ENCODE measurements at regions of chr10 and their contacts with region 1.

Region 1: DNA sequence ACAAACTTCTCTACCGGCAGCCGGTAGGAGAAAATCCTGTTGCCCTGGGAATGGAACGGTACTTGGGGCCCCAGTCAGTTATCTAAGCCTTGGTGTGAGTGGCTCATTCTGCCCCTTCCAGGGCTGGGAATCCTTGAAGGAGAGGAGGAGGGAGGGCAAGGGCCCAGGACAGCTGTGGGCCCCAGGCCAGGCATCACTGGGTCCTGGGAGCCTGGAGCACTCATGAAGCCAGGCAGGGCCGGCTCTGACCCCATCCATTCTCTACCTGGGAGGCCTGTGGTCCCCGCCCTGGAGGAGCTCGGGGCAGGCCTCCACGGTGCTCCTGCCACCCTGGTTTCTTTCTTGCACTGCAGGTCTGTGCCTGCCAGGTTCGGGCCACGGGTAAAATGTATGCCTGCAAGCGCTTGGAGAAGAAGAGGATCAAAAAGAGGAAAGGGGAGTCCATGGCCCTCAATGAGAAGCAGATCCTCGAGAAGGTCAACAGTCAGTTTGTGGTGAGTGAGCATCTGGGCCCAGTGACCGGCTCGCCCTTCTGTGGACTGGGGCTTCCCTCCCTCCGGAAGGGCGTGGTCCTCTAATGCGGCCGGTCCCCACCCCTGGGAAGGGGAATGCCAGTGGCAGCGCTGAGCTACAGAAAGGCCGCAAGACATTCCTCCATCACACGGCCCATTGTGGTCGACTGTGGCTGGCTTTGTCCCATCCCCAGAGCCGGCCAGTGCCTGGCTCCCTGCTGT is 111.3 kb downstream of the RGS10 start:
- DNase-seq: no peak
- H3K4me3 ChIP-seq: no peak overlapping the region
- H3K4me3 Mint-ChIP-seq: no peak overlapping the region
- H3K27ac ChIP-seq: no peak overlapping the region
- H3K27ac Mint-ChIP-seq: no peak overlapping the region
- H3K4me1 ChIP-seq: peaks cover 11% of the 10 kb centered on the region
- H3K4me1 Mint-ChIP-seq: peaks cover 0 to 7% (median 0%) of the 10 kb centered on the region in 3 donors
- H3K27me3 ChIP-seq: no peaks in the 10 kb centered on the region
- H3K27me3 Mint-ChIP-seq: peaks cover 0 to 3% of the 10 kb centered on the region in 2 donors

Region 2: GRCh38 chr10:119412244-119413092 is 18.7 kb before region 1 on chr10:
- CTCF ChIA-PET with region 1: no interaction called
- POLR2A ChIA-PET with region 1: no interaction called
- DNase-seq: no peak
- H3K4me3 ChIP-seq: no peak overlapping the region
- H3K4me3 Mint-ChIP-seq: no peak overlapping the region
- H3K27ac ChIP-seq: no peak overlapping the region
- H3K27ac Mint-ChIP-seq: no peak overlapping the region
- H3K4me1 ChIP-seq: no peaks in the 10 kb centered on the region
- H3K4me1 Mint-ChIP-seq: peaks cover 0 to under 1% (median 0%) of the 10 kb centered on the region in 3 donors
- H3K27me3 ChIP-seq: no peaks in the 10 kb centered on the region
- H3K27me3 Mint-ChIP-seq: no peaks in the 10 kb centered on the region

Region 3: DNA sequence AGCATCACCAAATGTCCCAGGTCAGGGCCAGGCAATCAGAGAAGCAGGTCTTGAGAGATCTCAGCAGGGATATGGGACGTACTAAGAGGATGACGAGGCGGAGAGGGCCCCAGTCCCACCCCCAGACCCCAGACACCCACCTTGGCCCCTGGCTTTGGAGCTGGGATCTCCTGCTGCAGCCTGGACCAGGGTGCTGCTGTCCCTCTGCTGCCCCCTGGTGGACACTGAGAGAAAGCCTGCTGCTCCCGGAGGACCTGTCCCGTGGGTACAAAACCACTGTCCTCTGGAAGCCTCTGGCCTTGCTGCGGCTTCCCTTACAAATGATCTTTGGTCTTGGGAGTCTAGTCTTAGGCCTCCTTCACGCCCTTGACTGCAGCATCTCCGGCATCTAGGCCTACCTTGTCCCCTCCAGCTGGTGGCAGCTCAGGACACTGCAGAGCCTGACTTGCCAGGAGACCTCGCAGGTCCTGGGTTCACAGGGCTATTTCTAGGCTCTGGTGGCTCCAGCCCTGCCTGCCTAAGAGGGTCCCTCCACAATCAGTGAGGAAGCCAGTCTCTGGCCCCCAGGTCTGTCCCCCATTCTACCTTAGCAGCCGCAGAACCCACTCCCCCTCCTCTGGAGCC is 14.2 kb after region 1 on chr10:
- CTCF ChIA-PET with region 1: interaction called, 17 read pairs
- POLR2A ChIA-PET with region 1: no interaction called
- DNase-seq: peak; percentile 71 to 87 (median 78)
- H3K4me3 ChIP-seq: no peak overlapping the region
- H3K4me3 Mint-ChIP-seq: no peak overlapping the region
- H3K27ac ChIP-seq: no peak overlapping the region
- H3K27ac Mint-ChIP-seq: peak overlapping the region in 3 of 8 donors; percentile 32 to 47 (median 36)
- H3K4me1 ChIP-seq: peaks cover 4% of the 10 kb centered on the region
- H3K4me1 Mint-ChIP-seq: peaks cover 8 to 14% (median 9%) of the 10 kb centered on the region in 3 donors
- H3K27me3 ChIP-seq: no peaks in the 10 kb centered on the region
- H3K27me3 Mint-ChIP-seq: no peaks in the 10 kb centered on the region

Measured in CD8-positive, alpha-beta memory T cell (primary cell).